Activated CD8-positive, alpha-beta memory T cell treated with anti-CD3 and anti-CD28 coated beads, Interleukin-2, amount 10 ng/mL, durations not matched to agents 7 days and 5 days (primary cell): ENCODE measurements at regions of chr2 and their contacts with region 1.

Region 1: GRCh38 chr2:20015472-20016083 is 3.1 kb upstream of the MATN3 start:
- DNase-seq: no peak
- ATAC-seq: no peak
- H3K4me3 Mint-ChIP-seq: no peak overlapping the region
- H3K27ac Mint-ChIP-seq: no peak overlapping the region
- H3K4me1 Mint-ChIP-seq: peaks cover 8% of the 10 kb centered on the region
- H3K27me3 Mint-ChIP-seq: peaks cover 40% of the 10 kb centered on the region

Region 2: GRCh38 chr2:19851116-19851695 is 164.4 kb before region 1 on chr2:
- CTCF ChIA-PET with region 1: no interaction called
- DNase-seq: peak; percentile 22
- ATAC-seq: no peak
- H3K4me3 Mint-ChIP-seq: no peak overlapping the region
- H3K27ac Mint-ChIP-seq: no peak overlapping the region
- H3K4me1 Mint-ChIP-seq: no peaks in the 10 kb centered on the region
- H3K27me3 Mint-ChIP-seq: peaks cover 2% of the 10 kb centered on the region

Region 3: DNA sequence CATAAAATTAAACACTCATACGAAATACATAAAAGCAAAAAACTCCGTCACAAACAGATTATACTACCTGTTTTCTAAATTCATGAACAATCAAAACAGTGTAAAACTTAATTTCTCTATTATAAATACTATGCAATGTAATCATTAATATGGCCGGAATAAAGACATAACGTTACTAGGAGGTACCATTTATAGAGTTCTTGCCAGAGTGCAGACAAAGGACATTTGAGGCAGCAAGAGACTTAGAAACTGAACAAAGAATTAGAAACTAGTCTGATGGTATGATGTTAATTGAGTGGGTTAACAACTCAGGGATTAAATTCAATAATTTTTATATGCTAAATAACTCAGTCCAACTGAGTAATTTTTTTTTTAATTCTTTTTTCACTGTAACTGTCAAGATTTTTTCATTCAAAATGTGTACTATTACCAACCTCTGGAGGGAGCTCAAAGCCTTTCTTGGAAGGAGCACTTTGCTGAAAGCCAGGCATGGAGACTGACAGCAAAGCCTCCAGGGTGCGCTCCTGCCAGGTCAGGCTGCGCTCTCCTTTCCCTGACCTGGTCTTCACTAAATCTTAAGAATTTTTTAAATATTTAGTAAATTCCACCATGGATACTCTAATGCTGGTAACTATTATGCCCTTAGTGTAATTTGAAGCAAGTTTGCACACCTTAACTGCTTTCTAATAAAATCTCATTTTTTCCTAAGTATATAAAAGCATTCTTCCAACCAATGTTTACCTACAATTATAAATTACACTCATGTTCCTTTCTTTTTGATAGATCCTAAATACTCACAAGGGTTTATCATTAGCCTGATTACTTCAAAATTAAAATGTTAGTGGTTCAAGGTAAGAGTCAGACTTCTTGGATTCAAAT is 59.8 kb before region 1 on chr2:
- CTCF ChIA-PET with region 1: interaction called, 10 read pairs
- DNase-seq: peak; percentile 65
- ATAC-seq: peak; percentile 83
- H3K4me3 Mint-ChIP-seq: no peak overlapping the region
- H3K27ac Mint-ChIP-seq: no peak overlapping the region
- H3K4me1 Mint-ChIP-seq: no peaks in the 10 kb centered on the region
- H3K27me3 Mint-ChIP-seq: no peaks in the 10 kb centered on the region

Region 4: GRCh38 chr2:20037660-20038059 is 22.1 kb after region 1 on chr2:
- CTCF ChIA-PET with region 1: interaction called, 12 read pairs
- DNase-seq: no peak
- ATAC-seq: no peak
- H3K4me3 Mint-ChIP-seq: no peak overlapping the region
- H3K27ac Mint-ChIP-seq: no peak overlapping the region
- H3K4me1 Mint-ChIP-seq: peaks cover 7% of the 10 kb centered on the region
- H3K27me3 Mint-ChIP-seq: no peaks in the 10 kb centered on the region

Region 5: GRCh38 chr2:20051532-20052228 is 36.1 kb after region 1 on chr2 and contains the start of gene LAPTM4A:
- CTCF ChIA-PET with region 1: interaction called, 13 read pairs
- DNase-seq: peak; percentile 99
- ATAC-seq: peak; percentile 98
- H3K4me3 Mint-ChIP-seq: no peak within 1 kb of the TSS
- H3K27ac Mint-ChIP-seq: no peak within 1 kb of the TSS
- H3K4me1 Mint-ChIP-seq: peaks cover 26% of the 10 kb centered on the region
- H3K27me3 Mint-ChIP-seq: peaks cover 17% of the 10 kb centered on the region
- total RNA-seq, gene LAPTM4A: 20.5 to 24.1 TPM

Region 6: DNA sequence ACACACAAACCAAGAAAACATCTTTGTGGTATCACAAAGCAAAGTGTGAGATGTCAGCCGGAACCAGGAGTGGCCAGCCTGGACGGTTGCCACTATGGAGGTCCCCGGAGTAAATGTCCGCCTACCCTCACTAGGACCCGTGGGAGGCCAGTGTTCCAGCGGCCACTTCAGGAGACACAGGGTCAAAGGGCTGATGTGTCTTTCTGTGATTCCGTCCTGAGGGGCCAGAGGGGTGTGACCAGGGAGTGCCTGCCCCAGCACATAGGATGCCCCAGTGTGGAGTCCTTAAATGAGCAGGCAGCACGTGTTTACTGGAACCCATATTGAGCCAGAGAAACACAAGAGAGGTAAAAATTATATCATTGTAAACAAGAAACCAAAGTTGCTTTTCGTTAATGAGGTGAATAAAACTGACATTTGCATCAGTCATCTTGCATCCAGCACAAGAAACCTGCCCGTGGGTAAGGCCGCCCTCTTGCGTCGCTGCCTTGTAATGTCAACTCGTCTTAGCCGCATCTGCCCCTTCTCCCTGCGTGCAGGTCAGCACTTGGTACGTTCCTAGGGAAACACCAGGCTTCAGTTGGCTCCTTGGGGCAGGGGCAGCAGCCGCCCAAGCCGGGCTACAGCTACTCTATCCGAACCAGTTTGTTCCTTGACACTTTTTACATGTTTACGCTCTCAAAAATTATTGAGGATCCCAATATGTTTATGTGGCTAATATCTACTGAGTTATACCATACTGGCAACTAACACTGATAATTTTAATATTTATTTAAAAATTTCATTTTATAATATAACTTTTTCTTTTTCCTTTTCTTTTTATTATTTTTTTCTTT is 82.5 kb after region 1 on chr2:
- CTCF ChIA-PET with region 1: interaction called, 18 read pairs
- DNase-seq: peak; percentile 86
- ATAC-seq: peak; percentile 92
- H3K4me3 Mint-ChIP-seq: no peak overlapping the region
- H3K27ac Mint-ChIP-seq: no peak overlapping the region
- H3K4me1 Mint-ChIP-seq: peaks cover 1% of the 10 kb centered on the region
- H3K27me3 Mint-ChIP-seq: peaks cover 20% of the 10 kb centered on the region